Activated T-helper 1 cell treated with anti-CD3 and anti-CD28 coated beads, Interleukin-12 subunit alpha, Interleukin-12 subunit beta, Interleukin-2, Interleukin-4 antibody, amounts not matched to agents 30 ng/mL and 10 ng/mL and 1 ng/mL, durations not matched to agents 14 hours and 24 hours and 36 hours (primary cell): ENCODE measurements at regions of chr13 and their contacts with region 1.

Region 1: DNA sequence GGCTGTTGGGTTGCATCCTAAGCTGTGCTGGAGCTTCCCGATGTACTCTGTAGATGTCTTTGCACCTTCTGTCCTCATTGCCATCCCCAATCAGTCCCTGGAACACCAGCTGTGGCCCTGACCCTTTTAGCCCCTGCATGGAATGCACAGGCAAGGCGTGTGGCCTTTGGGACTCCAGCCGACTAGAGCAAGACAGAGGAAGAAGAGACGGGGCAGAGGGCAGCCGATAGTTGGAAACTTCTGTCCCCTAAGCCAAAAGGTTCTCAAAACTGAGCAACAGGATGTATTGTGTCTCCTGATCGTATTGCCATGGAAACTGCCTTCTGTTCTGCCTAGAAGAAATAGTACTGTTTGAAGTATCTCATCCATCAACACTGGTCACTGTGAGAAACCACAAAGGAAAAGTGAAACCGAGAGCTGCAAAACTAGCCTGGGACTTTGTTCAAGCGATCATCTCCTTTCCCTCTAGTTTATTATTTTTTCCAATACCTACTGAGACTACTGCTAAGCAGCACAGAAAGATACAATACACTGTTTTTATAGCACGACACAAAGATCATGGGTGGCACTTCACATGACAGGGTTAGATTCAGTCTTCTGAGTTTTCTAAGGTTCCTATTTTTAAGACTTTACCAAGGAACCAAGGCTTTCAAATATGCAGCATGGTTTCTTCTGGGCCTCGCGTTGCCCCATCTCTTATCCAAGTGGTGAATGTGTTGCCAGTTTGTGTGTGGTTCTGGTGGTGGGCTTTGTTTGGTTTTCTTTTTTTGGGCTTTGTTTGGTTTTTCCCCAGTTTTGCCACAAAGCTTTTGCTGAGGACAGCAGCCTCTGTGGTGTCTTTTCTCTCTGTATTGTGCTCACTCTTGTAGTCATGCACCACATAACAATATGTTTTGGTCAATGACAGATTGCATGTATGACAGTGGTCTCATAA is 49.2 kb upstream of the GPR183 start:
- DNase-seq: peak; percentile 74
- H3K4me3 Mint-ChIP-seq: peak overlapping the region; percentile 62
- H3K27ac Mint-ChIP-seq: peak overlapping the region; percentile 95
- H3K4me1 Mint-ChIP-seq: peaks cover 99% of the 10 kb centered on the region
- H3K27me3 Mint-ChIP-seq: peaks cover 3% of the 10 kb centered on the region

Region 2: GRCh38 chr13:99288089-99288488 is 68.3 kb before region 1 on chr13:
- intact Hi-C with region 1: loop called (anchors 1 kb)
- DNase-seq: no peak
- H3K4me3 Mint-ChIP-seq: peak overlapping the region; percentile 6
- H3K27ac Mint-ChIP-seq: peak overlapping the region; percentile 50
- H3K4me1 Mint-ChIP-seq: peaks cover 61% of the 10 kb centered on the region
- H3K27me3 Mint-ChIP-seq: no peaks in the 10 kb centered on the region

Region 3: DNA sequence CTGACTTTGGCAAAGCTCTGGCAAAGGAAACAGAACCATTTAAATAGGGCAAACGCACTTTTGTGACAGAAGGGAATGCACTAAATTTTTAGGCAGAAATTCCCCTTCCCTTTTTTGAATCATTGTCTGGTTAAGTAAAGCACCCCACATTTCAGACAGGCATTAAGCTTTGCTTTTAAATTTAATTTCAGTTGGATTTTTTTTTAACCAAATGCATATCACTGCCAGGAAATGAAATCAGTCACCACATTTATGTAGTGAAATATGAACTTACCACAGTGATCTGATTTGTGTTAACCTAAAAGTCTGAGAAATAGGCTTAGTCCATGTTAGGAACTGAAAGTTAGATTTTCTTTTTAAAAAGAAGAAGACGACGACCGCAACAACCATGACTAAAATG is 60.0 kb before region 1 on chr13:
- intact Hi-C with region 1: loop called (anchors 1 kb)
- DNase-seq: no peak
- H3K4me3 Mint-ChIP-seq: peak overlapping the region; percentile 77
- H3K27ac Mint-ChIP-seq: peak overlapping the region; percentile 95
- H3K4me1 Mint-ChIP-seq: peaks cover 73% of the 10 kb centered on the region
- H3K27me3 Mint-ChIP-seq: no peaks in the 10 kb centered on the region

Region 4: GRCh38 chr13:99371956-99372355 is 15.5 kb after region 1 on chr13:
- intact Hi-C with region 1: loop called (anchors 1 kb)
- DNase-seq: no peak
- H3K4me3 Mint-ChIP-seq: peak overlapping the region; percentile 58
- H3K27ac Mint-ChIP-seq: peak overlapping the region; percentile 26
- H3K4me1 Mint-ChIP-seq: peaks cover 70% of the 10 kb centered on the region
- H3K27me3 Mint-ChIP-seq: peaks cover 4% of the 10 kb centered on the region

Region 5: DNA sequence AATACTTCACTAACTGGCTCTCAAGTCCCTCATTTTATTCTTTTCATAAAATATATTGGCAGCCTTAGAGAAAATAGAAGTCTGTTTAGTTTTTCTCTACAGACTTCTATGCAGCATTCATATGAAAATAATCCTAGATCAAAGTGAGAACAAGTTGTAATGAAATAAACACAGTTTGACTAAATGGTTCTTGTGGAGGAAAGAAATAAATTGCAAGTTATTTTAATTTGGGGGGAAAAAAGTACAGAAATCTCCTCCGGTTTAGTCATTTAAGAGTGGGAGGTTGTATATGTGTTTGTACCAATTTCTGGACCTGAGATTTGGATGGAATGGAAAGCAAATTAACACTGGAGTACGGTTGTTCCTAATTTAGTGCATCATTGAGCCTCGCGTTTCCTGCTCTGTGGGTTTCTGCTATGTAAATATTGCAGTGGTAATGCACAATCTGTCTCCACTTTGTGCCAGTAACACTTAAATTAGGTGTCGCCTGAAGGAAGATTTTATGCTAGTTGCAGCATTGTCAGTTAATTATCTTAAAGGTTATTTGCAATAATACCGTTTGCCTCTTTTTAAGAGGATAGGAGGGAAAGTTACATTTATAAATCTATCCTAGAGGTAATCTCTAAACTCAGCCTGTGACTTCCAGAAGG is 514.9 kb after region 1 on chr13:
- intact Hi-C with region 1: no loop called
- DNase-seq: no peak
- H3K4me3 Mint-ChIP-seq: no peak overlapping the region
- H3K27ac Mint-ChIP-seq: no peak overlapping the region
- H3K4me1 Mint-ChIP-seq: no peaks in the 10 kb centered on the region
- H3K27me3 Mint-ChIP-seq: peaks cover 57% of the 10 kb centered on the region